ENCODE measurements at regions of chrX and their contacts with region 1.

Region 1: DNA sequence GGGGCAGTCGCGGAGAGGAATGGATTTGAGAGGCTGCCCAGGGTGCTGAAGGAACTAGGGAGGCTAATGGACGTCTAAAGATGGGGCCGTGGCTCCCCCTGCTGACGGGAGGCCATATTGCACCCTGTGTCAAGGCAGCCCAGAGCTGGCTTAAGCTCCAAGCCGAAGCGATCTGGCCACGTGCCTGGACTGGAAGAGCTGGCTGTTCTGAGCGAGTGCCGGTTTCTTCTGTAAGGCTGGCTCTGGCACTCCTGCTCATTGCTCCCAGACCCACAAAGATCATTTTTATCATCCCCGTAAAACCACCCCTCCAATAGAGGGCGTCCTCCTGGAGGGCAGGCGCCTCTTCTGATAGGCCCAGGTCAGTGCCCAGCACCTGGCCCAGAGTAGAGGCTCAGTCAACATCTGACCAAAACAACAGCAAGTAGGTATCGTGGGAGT is 5.6 kb downstream of the PNCK start:
- DNase-seq: no peak
- H3K4me3 ChIP-seq: peak overlapping the region; percentile 25; the same call in 1 of the 2 replicates
- CTCF ChIP-seq: peak; percentile 79

Region 2: DNA sequence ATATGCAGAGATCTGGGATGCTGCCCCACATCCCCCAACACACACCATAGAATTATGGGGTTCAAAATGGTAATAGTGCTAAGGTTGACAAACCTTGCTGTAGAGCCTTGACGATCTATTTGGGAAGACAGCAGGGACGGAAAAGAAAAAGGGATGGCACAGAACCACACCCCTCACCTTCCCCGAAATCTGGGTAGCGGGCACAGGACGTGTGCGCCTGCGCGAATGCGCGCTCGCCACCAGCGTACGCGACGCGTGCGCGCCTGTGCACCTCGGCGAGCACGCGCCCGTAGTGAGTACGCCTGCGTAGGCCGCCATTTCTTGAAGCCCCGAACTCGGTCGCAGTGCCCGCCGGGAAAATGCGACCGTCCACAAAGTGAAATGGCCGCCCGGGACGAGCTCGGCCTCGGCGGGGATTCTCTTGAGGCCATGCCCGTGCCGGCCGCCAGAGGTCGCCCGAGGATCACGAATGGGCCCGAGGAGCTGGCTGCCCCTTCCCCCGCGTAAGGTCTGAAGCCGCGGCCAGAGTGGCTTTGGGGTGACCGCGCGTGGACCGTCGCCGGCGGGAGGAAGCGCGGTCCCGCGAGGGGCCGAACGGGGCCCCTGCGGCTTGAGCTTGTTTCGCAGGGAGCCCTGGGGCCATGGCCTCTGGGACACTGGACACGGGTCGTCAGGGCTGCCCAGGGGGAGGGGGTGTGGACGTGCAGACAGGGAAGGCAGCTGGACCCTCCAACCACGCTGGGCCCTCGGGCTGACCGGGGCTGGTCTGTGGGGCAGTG is 726.5 kb before region 1 on chrX:
- CTCF ChIA-PET with region 1: interaction called, 19 read pairs
- POLR2A ChIA-PET with region 1: no interaction called
- DNase-seq: peak; percentile 45
- H3K4me3 ChIP-seq: peak overlapping the region; percentile 66
- CTCF ChIP-seq: peak; percentile 81

Region 3: GRCh38 chrX:153547195-153547594 is 120.8 kb before region 1 on chrX:
- CTCF ChIA-PET with region 1: interaction called, 122 read pairs
- POLR2A ChIA-PET with region 1: no interaction called
- DNase-seq: no peak
- H3K4me3 ChIP-seq: no peak overlapping the region
- CTCF ChIP-seq: no peak

Region 4: DNA sequence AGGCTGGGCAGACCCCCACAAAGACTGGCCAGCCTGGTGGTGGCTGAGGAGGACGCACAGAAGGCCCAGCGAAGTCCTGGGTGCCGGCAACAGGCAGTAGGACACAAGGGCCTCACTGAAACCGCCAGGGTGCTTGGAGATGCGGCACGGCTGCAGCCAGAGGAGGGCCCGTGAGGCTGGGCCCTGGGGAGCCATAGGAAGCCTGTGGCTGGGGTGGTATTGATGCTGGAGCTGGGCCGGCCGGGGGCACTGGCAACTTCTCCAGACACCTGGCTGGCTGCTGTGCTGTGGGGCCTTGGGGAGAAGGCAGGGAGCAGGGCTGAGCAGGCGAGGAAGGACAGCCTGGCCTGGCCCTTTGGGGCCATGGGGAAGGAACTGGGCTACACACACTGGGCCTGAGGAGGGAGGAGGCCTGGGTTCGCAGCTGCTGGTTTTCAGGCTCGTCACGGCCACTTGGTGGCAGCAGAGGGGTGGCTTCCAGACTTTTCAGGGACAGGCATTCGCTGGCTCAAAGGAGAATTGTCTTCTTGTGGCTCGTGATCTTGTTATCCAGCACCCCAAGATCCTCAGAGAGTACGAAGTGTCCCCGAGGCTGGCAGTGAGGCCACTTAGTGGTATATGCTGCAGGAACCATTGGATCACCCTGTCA is 113.3 kb before region 1 on chrX:
- CTCF ChIA-PET with region 1: interaction called, 122 read pairs
- POLR2A ChIA-PET with region 1: no interaction called
- DNase-seq: no peak
- H3K4me3 ChIP-seq: no peak overlapping the region
- CTCF ChIP-seq: peak; percentile 73

Region 5: GRCh38 chrX:153609917-153610428 is 58.0 kb before region 1 on chrX:
- CTCF ChIA-PET with region 1: interaction called, 58 read pairs
- POLR2A ChIA-PET with region 1: no interaction called
- DNase-seq: no peak
- H3K4me3 ChIP-seq: peak overlapping the region; percentile 47
- CTCF ChIP-seq: peak; percentile 86

Region 6: GRCh38 chrX:153657161-153657560 is 10.8 kb before region 1 on chrX:
- CTCF ChIA-PET with region 1: interaction called, 39 read pairs
- POLR2A ChIA-PET with region 1: no interaction called
- DNase-seq: no peak
- H3K4me3 ChIP-seq: no peak overlapping the region
- CTCF ChIP-seq: no peak

Region 7: GRCh38 chrX:153684467-153685155 is 16.6 kb after region 1 on chrX:
- CTCF ChIA-PET with region 1: interaction called, 19 read pairs
- POLR2A ChIA-PET with region 1: no interaction called
- DNase-seq: no peak
- H3K4me3 ChIP-seq: no peak overlapping the region
- CTCF ChIP-seq: no peak

Measured in AG04449 (cell line).